Aorta (tissue), 5 donors: ENCODE measurements at regions of chr6 and their contacts with region 1.

Region 1: DNA sequence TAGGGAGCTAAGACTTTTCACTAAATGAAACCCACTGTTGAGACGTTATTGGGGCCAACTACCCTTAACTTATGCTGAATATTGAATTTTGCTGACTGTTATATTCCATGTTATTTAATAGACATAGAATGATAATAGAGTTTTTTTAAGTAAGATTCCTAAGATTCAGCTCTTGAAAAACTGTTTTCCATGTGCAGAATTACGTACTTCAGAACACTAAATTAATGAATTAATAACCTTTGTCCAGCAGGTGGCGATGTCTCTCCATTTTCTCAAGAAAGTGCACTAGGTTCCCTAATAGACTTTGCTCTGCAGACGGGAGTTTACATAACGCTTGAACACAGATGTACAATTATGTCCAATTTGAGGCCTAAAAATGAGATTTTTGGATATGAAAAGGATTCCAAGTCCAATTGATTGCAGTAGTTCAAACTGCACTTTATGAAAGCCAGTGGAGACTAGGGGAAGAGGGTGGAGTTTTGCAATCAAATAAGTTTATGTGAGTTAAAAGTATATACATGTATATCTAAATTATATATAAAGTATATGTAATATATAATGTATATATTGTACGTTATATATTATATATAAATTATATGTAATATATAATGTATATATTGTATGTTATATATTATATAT is 282.1 kb downstream of the UST start:
- DNase-seq: peak in 1 of 2 donors; percentile 62
- ATAC-seq: peak; percentile 83
- H3K4me3 ChIP-seq: no peak overlapping the region
- H3K27ac ChIP-seq: no peak overlapping the region
- H3K4me1 ChIP-seq: peaks cover 0 to 3% of the 10 kb centered on the region in 2 donors
- H3K27me3 ChIP-seq: no peaks in the 10 kb centered on the region

Region 2: DNA sequence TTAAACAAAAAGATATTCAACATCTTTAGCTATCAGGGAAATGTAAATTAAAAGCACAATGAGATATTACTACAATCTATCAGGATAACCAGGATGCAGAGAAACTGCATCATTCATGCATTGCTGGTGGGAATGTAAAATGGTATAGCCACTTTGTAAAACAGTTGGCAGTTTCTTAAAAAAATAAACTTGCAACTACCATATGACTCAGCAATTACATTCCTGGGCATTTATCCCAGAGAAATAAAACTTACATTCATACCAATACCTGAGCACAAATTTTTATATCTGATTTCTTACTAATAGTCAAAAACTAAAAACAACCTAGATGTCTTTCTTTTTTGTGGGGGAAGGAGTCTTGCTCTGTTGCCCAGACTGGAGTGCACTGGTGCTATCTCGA is 98.3 kb after region 1 on chr6:
- intact Hi-C with region 1: no loop called
- DNase-seq: no peak
- ATAC-seq: no peak
- H3K4me3 ChIP-seq: no peak overlapping the region
- H3K27ac ChIP-seq: no peak overlapping the region
- H3K4me1 ChIP-seq: no peaks in the 10 kb centered on the region
- H3K27me3 ChIP-seq: no peaks in the 10 kb centered on the region

Region 3: GRCh38 chr6:149190224-149190831 is 161.4 kb after region 1 on chr6:
- intact Hi-C with region 1: no loop called
- DNase-seq: peak in 1 of 2 donors; percentile 69
- ATAC-seq: no peak
- H3K4me3 ChIP-seq: no peak overlapping the region
- H3K27ac ChIP-seq: no peak overlapping the region
- H3K4me1 ChIP-seq: no peaks in the 10 kb centered on the region
- H3K27me3 ChIP-seq: no peaks in the 10 kb centered on the region

Region 4: GRCh38 chr6:149513915-149514314 is 485.0 kb after region 1 on chr6:
- intact Hi-C with region 1: loop called (anchors 5 kb)
- DNase-seq: no peak
- ATAC-seq: no peak
- H3K4me3 ChIP-seq: no peak overlapping the region
- H3K27ac ChIP-seq: no peak overlapping the region
- H3K4me1 ChIP-seq: no peaks in the 10 kb centered on the region
- H3K27me3 ChIP-seq: no peaks in the 10 kb centered on the region